ENCODE measurements at regions of chr4 and their contacts with region 1.

Region 1: DNA sequence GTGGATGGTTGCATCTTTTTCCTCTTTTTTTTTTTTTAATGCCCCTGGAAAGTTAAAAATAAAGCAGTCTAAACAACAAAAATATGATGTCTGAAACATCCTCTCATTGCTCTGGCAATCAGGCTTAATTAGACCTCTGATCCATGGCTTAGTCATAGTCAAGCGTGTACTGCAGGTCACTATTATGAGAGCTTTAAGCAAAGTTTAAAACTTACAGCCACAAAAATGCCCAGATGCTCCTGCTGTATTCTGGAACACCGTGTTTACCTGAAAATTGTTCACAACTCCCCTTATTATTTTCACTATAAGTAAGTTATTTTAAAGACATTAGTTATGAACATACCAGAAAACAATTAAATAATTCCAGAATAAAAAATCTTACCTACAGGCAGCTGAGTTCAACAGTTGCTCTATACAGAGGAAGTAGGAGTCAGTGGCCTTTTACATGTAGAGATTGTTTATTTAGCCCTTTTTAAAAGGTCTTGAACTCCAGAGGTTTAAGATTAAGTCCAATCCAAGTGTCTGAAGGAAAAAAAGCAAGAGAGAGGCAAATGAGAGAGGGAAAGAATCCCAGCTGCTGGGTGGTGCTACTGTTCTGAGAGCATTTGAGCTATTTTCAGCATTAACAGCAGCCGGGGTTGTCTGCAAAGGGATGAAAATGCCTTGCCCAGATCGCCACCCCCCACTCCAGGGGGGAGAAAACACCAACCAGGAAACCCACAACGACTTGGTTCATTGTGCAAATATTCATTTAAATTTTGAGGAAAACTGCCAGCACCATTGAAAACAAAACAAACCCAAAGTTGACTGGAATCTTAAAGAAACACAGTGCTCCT is 36.9 kb downstream of the SORBS2 start:
- DNase-seq: peak in 1 of 2 donors; percentile 48
- ATAC-seq: peak in 5 of 8 donors; percentile 27 to 60 (median 41)
- H3K4me3 ChIP-seq: peak overlapping the region; percentile 1 to 50 (median 44)
- H3K27ac ChIP-seq: peak overlapping the region; percentile 65 to 93 (median 80)
- H3K4me1 ChIP-seq: peaks cover 0 to 89% (median 44%) of the 10 kb centered on the region in 9 donors
- H3K27me3 ChIP-seq: no peaks in the 10 kb centered on the region
- CTCF ChIP-seq: peak in 1 of 9 donors; percentile 14

Region 2: GRCh38 chr4:186021461-186022167 is 246.6 kb after region 1 on chr4:
- intact Hi-C with region 1: loop called in 1 of 10 experiments (anchors 10 kb)
- DNase-seq: peak; percentile 25 to 36
- ATAC-seq: peak; percentile 62 to 86 (median 72)
- H3K4me3 ChIP-seq: peak overlapping the region in 8 of 10 donors; percentile 5 to 47 (median 32)
- H3K27ac ChIP-seq: peak overlapping the region in 5 of 10 donors; percentile 6 to 68 (median 35)
- H3K4me1 ChIP-seq: peaks cover 0 to 20% (median 7%) of the 10 kb centered on the region in 9 donors
- H3K27me3 ChIP-seq: no peaks in the 10 kb centered on the region
- CTCF ChIP-seq: peak; percentile 60 to 92 (median 85)

Region 3: DNA sequence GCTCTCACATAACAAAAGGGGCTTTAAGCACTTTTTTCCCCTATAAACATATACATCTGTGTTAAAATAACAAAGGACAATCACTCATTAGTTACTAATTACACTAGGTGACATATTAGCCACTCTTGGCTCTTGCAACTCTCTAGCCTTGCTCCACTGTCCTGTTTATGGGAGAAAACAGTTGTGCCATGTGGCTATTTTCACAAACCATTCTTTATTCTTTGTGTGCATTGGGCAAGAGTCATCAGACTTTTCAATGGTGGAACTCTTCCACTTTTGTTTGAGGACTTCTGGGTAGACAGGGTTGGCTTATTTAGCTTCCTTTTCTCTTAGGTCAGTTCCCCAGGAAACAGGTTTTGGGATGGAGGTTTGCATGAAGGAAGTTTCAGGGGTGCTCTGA is 313.5 kb after region 1 on chr4:
- intact Hi-C with region 1: no loop called
- DNase-seq: no peak
- ATAC-seq: peak in 1 of 8 donors; percentile 16
- H3K4me3 ChIP-seq: no peak overlapping the region
- H3K27ac ChIP-seq: no peak overlapping the region
- H3K4me1 ChIP-seq: no peaks in the 10 kb centered on the region
- H3K27me3 ChIP-seq: no peaks in the 10 kb centered on the region
- CTCF ChIP-seq: no peak